ENCODE measurements at regions of chr17 and their contacts with region 1.

Region 1: GRCh38 chr17:27760069-27760885 is 40.1 kb downstream of the NOS2 start:
- DNase-seq: no peak
- ATAC-seq: no peak

Region 2: DNA sequence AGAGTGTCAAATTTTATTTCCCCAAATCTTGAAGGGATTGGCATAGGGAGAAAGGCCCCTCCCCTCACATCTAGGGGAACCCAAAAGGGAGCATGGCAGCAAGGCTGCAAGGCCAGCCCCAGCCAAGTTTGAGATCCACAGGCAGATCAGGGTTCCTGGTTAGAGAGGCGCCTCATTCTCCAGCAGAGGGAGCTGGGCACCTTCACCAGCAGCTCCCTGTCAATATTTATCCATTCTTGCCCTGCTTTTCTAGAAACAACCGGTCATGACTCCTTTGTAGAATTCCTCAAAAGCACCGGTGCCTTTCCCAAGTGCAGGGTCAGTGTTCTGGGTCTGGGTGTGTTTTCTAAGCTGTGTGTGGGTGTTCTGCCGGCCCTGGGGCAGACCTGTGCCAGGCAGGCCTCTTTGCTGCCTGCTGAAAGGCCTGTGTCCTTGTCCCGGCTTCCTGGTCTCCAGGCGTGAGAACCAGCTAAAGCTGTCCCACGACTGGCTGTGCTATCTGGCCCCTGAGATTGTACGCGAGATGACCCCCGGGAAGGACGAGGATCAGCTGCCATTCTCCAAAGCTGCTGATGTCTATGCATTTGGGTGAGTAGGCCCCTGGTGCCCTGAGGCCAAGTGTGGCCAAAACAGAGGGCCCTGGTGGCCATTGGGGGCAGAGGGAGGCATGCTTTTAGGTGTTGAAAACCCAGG is 150.5 kb before region 1 on chr17:
- intact Hi-C with region 1: loop called (anchors 5 kb)
- DNase-seq: peak; percentile 71
- ATAC-seq: peak; percentile 56

Region 3: DNA sequence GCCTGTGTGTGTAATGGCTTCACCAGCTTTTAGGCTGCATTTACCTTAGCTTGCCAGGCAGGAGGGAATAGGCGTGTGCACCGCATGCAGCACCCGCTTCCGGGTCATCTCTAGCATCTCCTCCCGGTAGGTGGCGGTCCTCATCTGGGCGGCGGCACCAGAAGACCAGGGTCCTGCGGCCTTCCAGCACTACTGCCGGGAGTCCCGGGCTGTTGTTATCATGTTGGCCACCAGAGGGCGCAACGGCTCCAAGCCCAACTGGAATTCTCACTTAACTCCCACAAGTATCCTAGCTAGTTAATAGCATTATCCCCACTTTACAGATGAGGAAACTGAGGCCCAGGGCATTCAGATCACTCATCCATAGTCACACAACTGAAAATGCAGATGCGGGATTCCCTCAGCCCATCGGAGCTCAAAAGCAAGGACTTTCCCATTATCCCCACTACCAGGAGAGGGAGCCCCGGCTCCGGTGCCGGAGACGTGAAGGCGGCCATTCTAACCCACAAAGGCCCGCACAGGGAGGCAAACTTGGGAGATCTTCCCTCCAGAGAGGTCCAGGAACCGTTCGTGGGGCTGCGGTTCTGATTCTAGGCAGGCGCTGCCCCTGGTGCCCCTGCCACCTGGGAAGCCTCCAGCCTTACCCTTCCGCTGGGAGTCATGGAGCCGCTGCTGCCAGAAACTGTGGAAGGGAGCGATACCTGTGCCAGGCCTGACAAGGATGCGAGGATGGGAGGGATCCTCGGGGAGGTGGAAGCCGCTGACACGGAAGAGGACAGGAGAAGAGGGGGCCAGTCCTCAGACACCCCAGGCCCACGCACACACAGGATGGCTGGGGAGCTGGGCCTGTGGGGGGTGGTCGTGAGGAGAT is 105.4 kb before region 1 on chr17:
- intact Hi-C with region 1: loop called (anchors 2 kb)
- DNase-seq: peak; percentile 87
- ATAC-seq: no peak

Region 4: GRCh38 chr17:27818401-27819105 is 58.3 kb after region 1 on chr17:
- intact Hi-C with region 1: no loop called
- DNase-seq: no peak
- ATAC-seq: peak; percentile 84

Region 5: GRCh38 chr17:27879987-27880608 is 119.8 kb after region 1 on chr17:
- intact Hi-C with region 1: loop called (anchors 1 kb)
- DNase-seq: peak; percentile 81
- ATAC-seq: peak; percentile 95